ENCODE measurements at regions of chr1 and their contacts with region 1.

Region 1: DNA sequence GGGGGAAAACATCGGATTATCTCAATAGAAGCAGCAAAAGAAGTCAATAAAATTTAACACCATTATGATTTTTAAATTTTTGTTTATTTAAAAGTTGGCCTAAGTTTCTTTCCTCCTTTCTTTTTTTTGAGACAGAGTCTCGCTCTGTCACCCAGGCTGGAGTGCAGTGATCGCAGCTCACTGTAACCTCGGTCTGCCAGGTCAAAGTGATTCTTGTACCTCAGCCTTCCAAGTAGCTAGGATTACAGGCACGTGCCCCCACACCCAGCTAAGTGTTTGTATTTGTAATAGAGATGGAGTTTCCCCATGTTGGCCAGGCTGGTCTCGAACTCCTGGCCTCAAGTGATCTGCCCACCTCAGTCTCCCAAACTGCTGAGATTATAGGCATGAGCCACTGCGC is 20.9 kb downstream of the SLC2A5 start:
- DNase-seq: no peak
- H3K4me3 ChIP-seq: no peak overlapping the region
- H3K27ac ChIP-seq: no peak overlapping the region
- H3K4me1 ChIP-seq: 0 out of 7 replicates have a peak, but pooled peaks cover 0 to 2% (median 0%) of the 10 kb centered on the region in 4 experiments
- H3K27me3 ChIP-seq: no peaks in the 10 kb centered on the region
- CTCF ChIP-seq: no peak
- EP300 ChIP-seq: no peak
- POLR2A ChIP-seq: no peak
- RAD21 ChIP-seq: no peak

Region 2: DNA sequence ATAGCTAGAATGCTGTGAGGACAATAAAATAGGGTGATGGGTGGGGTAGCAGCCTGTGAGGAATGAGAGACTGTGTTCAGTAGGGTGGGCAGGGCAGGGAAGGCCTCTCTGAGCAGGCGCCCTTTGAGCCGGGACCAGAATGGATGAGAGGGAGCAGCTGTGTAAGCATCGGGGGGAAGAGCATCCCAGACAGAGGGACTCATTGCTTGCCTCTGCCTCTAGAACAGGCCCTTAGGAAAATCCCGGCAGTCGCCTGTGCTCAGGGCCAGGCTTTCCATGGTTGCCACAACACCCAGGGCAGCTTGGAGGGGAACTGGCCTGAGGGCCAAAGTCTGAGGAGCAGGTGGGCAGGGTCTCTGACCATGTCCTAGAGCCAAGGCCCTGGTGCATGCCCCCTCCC is 23.1 kb before region 1 on chr1:
- CTCF ChIA-PET with region 1: no interaction called
- POLR2A ChIA-PET with region 1: no interaction called
- DNase-seq: no peak
- H3K4me3 ChIP-seq: no peak overlapping the region
- H3K27ac ChIP-seq: no peak overlapping the region
- H3K4me1 ChIP-seq: no peaks in the 10 kb centered on the region
- H3K27me3 ChIP-seq: no peaks in the 10 kb centered on the region
- CTCF ChIP-seq: no peak
- EP300 ChIP-seq: no peak
- POLR2A ChIP-seq: no peak
- RAD21 ChIP-seq: no peak

Region 3: GRCh38 chr1:9037476-9038337 is 10.8 kb before region 1 on chr1:
- CTCF ChIA-PET with region 1: interaction called, 14 read pairs
- POLR2A ChIA-PET with region 1: interaction called, 3 read pairs
- DNase-seq: no peak
- H3K4me3 ChIP-seq: no peak overlapping the region
- H3K27ac ChIP-seq: no peak overlapping the region
- H3K4me1 ChIP-seq: peaks cover 0 to 2% (median 0%) of the 10 kb centered on the region in 4 experiments; a peak in 2 of 7 replicates
- H3K27me3 ChIP-seq: no peaks in the 10 kb centered on the region; a peak in 1 of 7 replicates
- CTCF ChIP-seq: peak in 1 of 3 experiments; percentile 4; a peak in 1 of 4 replicates
- EP300 ChIP-seq: no peak
- POLR2A ChIP-seq: no peak
- RAD21 ChIP-seq: no peak

Region 4: DNA sequence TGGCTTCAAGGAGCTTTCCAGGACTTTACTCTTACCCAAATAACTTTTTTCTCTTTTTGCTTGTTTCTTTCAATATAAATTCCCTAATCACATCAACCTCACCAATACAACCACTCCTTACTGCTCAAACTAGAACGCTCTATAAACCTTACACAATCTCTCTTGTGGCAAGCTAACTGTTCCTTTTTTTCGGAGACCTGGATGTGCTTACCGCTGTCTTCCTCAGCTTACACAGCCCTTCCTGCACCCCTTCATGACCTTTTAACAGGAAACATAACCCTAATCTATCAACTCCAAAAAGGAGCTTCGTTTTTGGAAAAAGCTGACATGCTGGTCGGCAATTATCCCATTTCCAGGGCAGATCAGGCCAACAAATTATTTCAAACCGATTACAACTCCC is 45.0 kb after region 1 on chr1:
- CTCF ChIA-PET with region 1: no interaction called
- POLR2A ChIA-PET with region 1: no interaction called
- DNase-seq: no peak
- H3K4me3 ChIP-seq: no peak overlapping the region
- H3K27ac ChIP-seq: no peak overlapping the region
- H3K4me1 ChIP-seq: no peaks in the 10 kb centered on the region
- H3K27me3 ChIP-seq: no peaks in the 10 kb centered on the region
- CTCF ChIP-seq: no peak
- EP300 ChIP-seq: no peak
- POLR2A ChIP-seq: no peak
- RAD21 ChIP-seq: no peak

Measured in H1 (cell line).